HepG2 (cell line): ENCODE measurements at regions of chr7 and their contacts with region 1.

Region 1: GRCh38 chr7:156764016-156764669 is 123.6 kb downstream of the RNF32 start:
- DNase-seq: peak; percentile 68
- ATAC-seq: peak; percentile 100
- H3K4me3 ChIP-seq: no peak overlapping the region
- H3K27ac ChIP-seq: no peak overlapping the region
- H3K4me1 ChIP-seq: peaks cover 20% of the 10 kb centered on the region
- H3K27me3 ChIP-seq: no peaks in the 10 kb centered on the region
- CTCF ChIP-seq: peak; percentile 87
- EP300 ChIP-seq: no peak
- POLR2A ChIP-seq: no peak
- RAD21 ChIP-seq: peak; percentile 92

Region 2: GRCh38 chr7:156473476-156474240 is 290.5 kb before region 1 on chr7:
- CTCF ChIA-PET with region 1: no interaction called
- POLR2A ChIA-PET with region 1: no interaction called
- in situ Hi-C with region 1: no loop called
- intact Hi-C with region 1: loop called (anchors 1 kb)
- DNase-seq: peak; percentile 25
- ATAC-seq: peak; percentile 72
- H3K4me3 ChIP-seq: peak overlapping the region in 2 of 3 experiments; percentile 25 to 32; a peak in 3 of 6 replicates
- H3K27ac ChIP-seq: peak overlapping the region; percentile 54
- H3K4me1 ChIP-seq: peaks cover 34% of the 10 kb centered on the region
- H3K27me3 ChIP-seq: no peaks in the 10 kb centered on the region
- CTCF ChIP-seq: peak; percentile 80
- EP300 ChIP-seq: no peak
- POLR2A ChIP-seq: no peak
- RAD21 ChIP-seq: peak; percentile 70; the same call in 1 of the 2 replicates

Region 3: GRCh38 chr7:156515911-156516790 is 248.0 kb before region 1 on chr7:
- CTCF ChIA-PET with region 1: no interaction called
- POLR2A ChIA-PET with region 1: no interaction called
- in situ Hi-C with region 1: no loop called
- intact Hi-C with region 1: loop called (anchors 1 kb)
- DNase-seq: peak; percentile 98
- ATAC-seq: peak; percentile 92
- H3K4me3 ChIP-seq: peak overlapping the region; percentile 47 to 81 (median 55); a peak in 5 of 6 replicates
- H3K27ac ChIP-seq: peak overlapping the region; percentile 85
- H3K4me1 ChIP-seq: peaks cover 47% of the 10 kb centered on the region
- H3K27me3 ChIP-seq: no peaks in the 10 kb centered on the region
- CTCF ChIP-seq: peak; percentile 74
- EP300 ChIP-seq: peak; percentile 58 to 87; a peak in 3 of 4 replicates
- POLR2A ChIP-seq: peak; percentile 56 to 63
- RAD21 ChIP-seq: no peak

Region 4: DNA sequence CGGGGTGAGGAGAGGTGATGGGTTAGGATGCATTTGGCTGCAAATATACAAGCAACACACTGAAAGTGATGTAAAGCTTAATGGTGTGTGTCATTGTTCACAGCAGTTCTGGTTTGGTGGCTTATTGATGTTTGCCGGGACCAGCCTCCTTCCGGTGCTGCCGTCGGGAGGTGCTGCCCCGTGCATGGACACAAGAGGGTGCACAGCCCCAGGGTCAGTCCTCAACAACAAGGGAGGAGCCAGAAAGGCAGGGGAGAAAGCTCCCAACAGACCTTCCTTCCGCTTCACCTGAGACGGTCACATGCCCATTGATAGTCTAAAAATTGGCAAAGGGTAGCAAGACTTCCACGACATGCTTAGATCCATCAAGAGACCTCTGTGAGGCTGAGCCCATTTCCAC is 114.1 kb before region 1 on chr7:
- CTCF ChIA-PET with region 1: interaction called, 9 read pairs
- POLR2A ChIA-PET with region 1: no interaction called
- in situ Hi-C with region 1: loop called (anchors 10 kb)
- intact Hi-C with region 1: loop called (anchors 1 kb)
- DNase-seq: peak; percentile 57
- ATAC-seq: peak; percentile 99
- H3K4me3 ChIP-seq: no peak overlapping the region
- H3K27ac ChIP-seq: no peak overlapping the region
- H3K4me1 ChIP-seq: peaks cover 10% of the 10 kb centered on the region; the same call in 1 of the 2 replicates
- H3K27me3 ChIP-seq: no peaks in the 10 kb centered on the region
- CTCF ChIP-seq: peak; percentile 90
- EP300 ChIP-seq: no peak
- POLR2A ChIP-seq: no peak
- RAD21 ChIP-seq: peak; percentile 82

Region 5: DNA sequence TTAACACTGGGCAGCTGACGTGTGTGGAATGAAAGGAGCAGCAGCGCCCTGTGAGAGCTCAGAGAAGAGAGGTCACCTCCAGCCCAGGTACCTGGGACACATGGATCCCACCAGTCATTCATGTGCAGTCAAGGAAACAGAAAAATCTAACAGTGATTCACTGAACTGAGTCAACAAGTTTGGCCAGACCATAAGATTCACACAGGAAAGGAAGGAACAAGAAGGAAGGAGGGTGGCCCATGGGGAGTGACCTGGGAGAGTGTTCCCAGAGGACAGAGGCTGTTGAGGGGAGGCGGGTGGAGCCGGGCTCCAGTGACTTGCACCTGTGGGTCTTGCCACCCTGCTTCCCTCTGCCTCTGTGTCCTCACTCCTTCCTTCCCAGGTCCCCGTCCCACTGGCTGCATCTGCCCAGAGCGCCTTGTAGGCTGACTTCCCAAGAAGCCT is 95.9 kb before region 1 on chr7:
- CTCF ChIA-PET with region 1: no interaction called
- POLR2A ChIA-PET with region 1: no interaction called
- in situ Hi-C with region 1: no loop called
- intact Hi-C with region 1: loop called (anchors 5 kb)
- DNase-seq: peak; percentile 21
- ATAC-seq: no peak
- H3K4me3 ChIP-seq: no peak overlapping the region
- H3K27ac ChIP-seq: no peak overlapping the region
- H3K4me1 ChIP-seq: peaks cover 36% of the 10 kb centered on the region
- H3K27me3 ChIP-seq: no peaks in the 10 kb centered on the region
- CTCF ChIP-seq: no peak
- EP300 ChIP-seq: no peak
- POLR2A ChIP-seq: no peak
- RAD21 ChIP-seq: no peak

Region 6: GRCh38 chr7:156703773-156704482 is 60.2 kb before region 1 on chr7:
- CTCF ChIA-PET with region 1: no interaction called
- POLR2A ChIA-PET with region 1: no interaction called
- in situ Hi-C with region 1: no loop called
- intact Hi-C with region 1: no loop called
- DNase-seq: no peak
- ATAC-seq: no peak
- H3K4me3 ChIP-seq: no peak overlapping the region
- H3K27ac ChIP-seq: no peak overlapping the region
- H3K4me1 ChIP-seq: peaks cover 8% of the 10 kb centered on the region
- H3K27me3 ChIP-seq: no peaks in the 10 kb centered on the region
- CTCF ChIP-seq: no peak
- EP300 ChIP-seq: no peak
- POLR2A ChIP-seq: no peak
- RAD21 ChIP-seq: no peak